ENCODE measurements at regions of chr1 and their contacts with region 1.

Region 1: GRCh38 chr1:109532365-109533136 is 7.1 kb upstream of the GPR61 start:
- DNase-seq: peak; percentile 95
- H3K4me3 Mint-ChIP-seq: peak overlapping the region; percentile 53
- H3K27ac Mint-ChIP-seq: peak overlapping the region; percentile 95
- H3K4me1 Mint-ChIP-seq: peaks cover 39% of the 10 kb centered on the region
- H3K27me3 Mint-ChIP-seq: peaks cover 19% of the 10 kb centered on the region

Region 2: GRCh38 chr1:109239580-109240095 is 292.9 kb before region 1 on chr1:
- CTCF ChIA-PET with region 1: interaction called, 13 read pairs
- DNase-seq: peak; percentile 49
- H3K4me3 Mint-ChIP-seq: no peak overlapping the region
- H3K27ac Mint-ChIP-seq: no peak overlapping the region
- H3K4me1 Mint-ChIP-seq: peaks cover 10% of the 10 kb centered on the region
- H3K27me3 Mint-ChIP-seq: peaks cover 34% of the 10 kb centered on the region

Region 3: GRCh38 chr1:109263597-109264398 is 268.8 kb before region 1 on chr1:
- CTCF ChIA-PET with region 1: interaction called, 19 read pairs
- DNase-seq: peak; percentile 86
- H3K4me3 Mint-ChIP-seq: no peak overlapping the region
- H3K27ac Mint-ChIP-seq: no peak overlapping the region
- H3K4me1 Mint-ChIP-seq: peaks cover 3% of the 10 kb centered on the region
- H3K27me3 Mint-ChIP-seq: peaks cover 9% of the 10 kb centered on the region

Region 4: GRCh38 chr1:109282952-109283747 is 249.4 kb before region 1 on chr1 and contains the start of gene PSRC1:
- CTCF ChIA-PET with region 1: interaction called, 56 read pairs
- DNase-seq: peak; percentile 95
- H3K4me3 Mint-ChIP-seq: peak within 1 kb of the TSS; percentile 98
- H3K27ac Mint-ChIP-seq: peak within 1 kb of the TSS; percentile 90
- H3K4me1 Mint-ChIP-seq: peaks cover 38% of the 10 kb centered on the region
- H3K27me3 Mint-ChIP-seq: peaks cover 13% of the 10 kb centered on the region

Region 5: DNA sequence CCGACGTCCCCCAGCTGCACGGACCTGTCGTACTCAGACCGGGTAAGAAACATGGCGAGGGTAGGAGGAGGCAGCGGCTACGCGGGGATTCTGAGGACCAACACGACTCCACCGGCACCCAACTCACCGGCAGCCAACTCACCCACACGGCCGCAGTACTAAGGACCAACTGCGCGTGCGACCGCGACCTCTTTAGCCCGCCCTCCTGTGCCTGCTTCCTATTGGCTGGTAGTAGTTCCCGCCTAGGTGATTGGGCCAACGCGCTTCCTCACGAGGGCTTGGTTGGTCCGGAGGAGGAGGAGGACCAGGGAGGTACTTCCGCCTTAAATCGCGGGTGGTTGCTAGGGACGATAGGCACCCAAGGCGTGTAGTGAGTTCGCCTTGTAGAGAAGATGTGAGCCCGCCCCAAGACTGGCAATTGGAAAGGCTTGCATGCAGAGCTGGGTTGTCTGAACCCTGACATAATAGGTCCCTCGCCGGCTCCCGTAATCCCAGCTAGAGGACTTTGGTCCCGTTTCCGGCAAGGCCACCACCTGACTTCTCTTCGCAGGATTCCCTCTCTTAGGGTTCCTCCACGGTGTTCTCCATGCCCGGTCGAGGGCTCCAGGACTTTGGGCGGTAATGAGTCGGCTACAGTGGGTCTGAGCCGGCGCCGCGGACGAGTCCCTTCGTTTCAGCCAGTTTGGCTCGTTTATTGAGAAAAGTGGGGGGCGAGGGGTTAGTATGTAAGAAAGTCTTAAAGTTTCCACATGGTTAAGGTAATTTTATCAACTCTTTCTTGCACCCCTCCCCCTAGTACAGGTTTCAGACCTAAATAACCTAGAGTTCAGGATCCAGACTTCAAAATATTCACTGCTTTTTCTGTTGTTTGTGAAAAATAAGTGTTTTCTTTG is 106.0 kb before region 1 on chr1 and contains the start of gene PSMA5:
- CTCF ChIA-PET with region 1: interaction called, 16 read pairs
- DNase-seq: peak; percentile 98
- H3K4me3 Mint-ChIP-seq: peak within 1 kb of the TSS; percentile 93
- H3K27ac Mint-ChIP-seq: peak within 1 kb of the TSS; percentile 97
- H3K4me1 Mint-ChIP-seq: peaks cover 40% of the 10 kb centered on the region
- H3K27me3 Mint-ChIP-seq: no peaks in the 10 kb centered on the region

Region 6: GRCh38 chr1:109493805-109494539 is 38.6 kb before region 1 on chr1 and contains the start of gene CYB561D1:
- CTCF ChIA-PET with region 1: interaction called, 1,080 read pairs
- DNase-seq: peak; percentile 92
- H3K4me3 Mint-ChIP-seq: peak within 1 kb of the TSS; percentile 97
- H3K27ac Mint-ChIP-seq: peak within 1 kb of the TSS; percentile 84
- H3K4me1 Mint-ChIP-seq: peaks cover 59% of the 10 kb centered on the region
- H3K27me3 Mint-ChIP-seq: no peaks in the 10 kb centered on the region

Region 7: GRCh38 chr1:109556563-109556962 is 24.0 kb after region 1 on chr1:
- CTCF ChIA-PET with region 1: no interaction called
- DNase-seq: no peak
- H3K4me3 Mint-ChIP-seq: no peak overlapping the region
- H3K27ac Mint-ChIP-seq: no peak overlapping the region
- H3K4me1 Mint-ChIP-seq: peaks cover 39% of the 10 kb centered on the region
- H3K27me3 Mint-ChIP-seq: no peaks in the 10 kb centered on the region

Measured in activated naive CD4-positive, alpha-beta T cell treated with anti-CD3 and anti-CD28 coated beads, Interleukin-2, amount 10 ng/mL, durations not matched to agents 7 days and 5 days (primary cell).